MCF 10A (cell line): ENCODE measurements at regions of chr6 and their contacts with region 1.

Region 1: DNA sequence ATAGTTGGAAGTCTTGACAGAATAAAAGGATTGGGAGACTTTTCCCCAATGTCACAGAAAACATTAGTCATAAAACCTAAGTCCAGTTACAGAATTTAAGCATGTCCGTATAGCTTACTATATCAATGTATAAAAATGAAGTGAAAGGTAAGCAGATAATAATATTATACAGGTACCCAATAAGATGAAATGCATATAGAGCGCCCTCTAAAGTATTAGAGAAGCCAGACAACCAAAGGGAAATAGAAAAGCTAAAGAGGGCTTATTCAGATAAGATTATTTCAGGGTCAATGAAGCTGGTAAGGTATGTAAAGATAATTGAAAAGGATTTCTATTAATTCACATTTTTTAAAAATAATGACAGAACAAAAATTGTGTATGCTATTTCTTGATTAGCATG is 947.7 kb upstream of the MAP3K7 start:
- DNase-seq: peak; percentile 2
- H3K4me3 Mint-ChIP-seq: no peak overlapping the region
- H3K27ac Mint-ChIP-seq: no peak overlapping the region
- H3K4me1 Mint-ChIP-seq: no peaks in the 10 kb centered on the region
- H3K27me3 Mint-ChIP-seq: no peaks in the 10 kb centered on the region
- CTCF ChIP-seq: no peak

Region 2: GRCh38 chr6:91482498-91482897 is 52.1 kb before region 1 on chr6:
- CTCF ChIA-PET with region 1: no interaction called
- POLR2A ChIA-PET with region 1: no interaction called
- intact Hi-C with region 1: no loop called
- DNase-seq: no peak
- H3K4me3 Mint-ChIP-seq: no peak overlapping the region
- H3K27ac Mint-ChIP-seq: no peak overlapping the region
- H3K4me1 Mint-ChIP-seq: no peaks in the 10 kb centered on the region
- H3K27me3 Mint-ChIP-seq: no peaks in the 10 kb centered on the region
- CTCF ChIP-seq: no peak

Region 3: GRCh38 chr6:91509703-91510102 is 24.9 kb before region 1 on chr6:
- CTCF ChIA-PET with region 1: no interaction called
- POLR2A ChIA-PET with region 1: no interaction called
- intact Hi-C with region 1: loop called (anchors 1 kb)
- DNase-seq: peak; percentile 10
- H3K4me3 Mint-ChIP-seq: no peak overlapping the region
- H3K27ac Mint-ChIP-seq: no peak overlapping the region
- H3K4me1 Mint-ChIP-seq: peaks cover 5% of the 10 kb centered on the region
- H3K27me3 Mint-ChIP-seq: peaks cover 14% of the 10 kb centered on the region
- CTCF ChIP-seq: no peak